ENCODE measurements at regions of chr21 and their contacts with region 1.

Region 1: GRCh38 chr21:45973659-45974072 is 7.9 kb upstream of the COL6A1 start:
- DNase-seq: peak in 5 of 6 donors; percentile 61 to 84 (median 73)
- ATAC-seq: peak; percentile 71 to 78 (median 76)
- H3K4me3 ChIP-seq: peak overlapping the region; percentile 28 to 50 (median 44)
- H3K27ac ChIP-seq: peak overlapping the region; percentile 9 to 64 (median 56)
- H3K4me1 ChIP-seq: peaks cover 0 to 7% (median 0%) of the 10 kb centered on the region in 3 donors
- H3K27me3 ChIP-seq: peaks cover 0 to 4% (median 0%) of the 10 kb centered on the region in 4 donors
- CTCF ChIP-seq: peak in 3 of 4 donors; percentile 45 to 64 (median 52)

Region 2: DNA sequence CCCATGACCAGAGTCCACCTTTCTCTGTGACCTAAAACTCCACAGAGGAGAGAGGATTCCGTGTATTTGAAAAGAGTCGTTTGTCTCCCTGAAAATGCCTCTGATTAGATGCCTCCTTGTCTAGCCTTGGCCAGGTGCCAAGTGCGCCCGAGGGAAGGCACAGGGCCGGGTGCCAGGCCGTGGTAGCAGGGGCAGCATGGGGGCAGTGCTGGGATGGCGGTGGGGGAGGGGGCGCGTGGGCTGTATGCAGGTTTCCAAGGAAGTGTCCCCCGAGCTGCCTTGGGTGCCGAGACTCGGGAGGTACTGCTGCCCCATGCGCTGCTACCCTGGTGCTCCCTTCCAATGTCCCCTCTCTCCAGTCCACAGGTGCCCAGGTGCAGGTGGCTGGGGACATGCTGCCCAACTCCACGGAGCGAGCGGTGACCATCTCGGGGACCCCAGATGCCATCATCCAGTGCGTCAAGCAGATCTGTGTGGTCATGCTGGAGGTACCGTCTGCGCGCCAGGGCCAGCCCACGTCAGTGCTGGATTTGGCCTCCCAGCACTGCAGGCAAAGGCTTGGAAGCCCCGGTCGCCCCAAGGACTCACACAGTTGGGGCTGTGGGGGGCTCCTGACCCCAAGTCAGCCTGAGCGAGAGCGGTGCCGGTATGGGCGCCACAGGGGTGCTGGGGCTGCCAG is 63.0 kb before region 1 on chr21:
- intact Hi-C with region 1: loop called in 1 of 3 experiments (anchors 10 kb)
- DNase-seq: peak in 1 of 6 donors; percentile 57
- ATAC-seq: no peak
- H3K4me3 ChIP-seq: no peak overlapping the region
- H3K27ac ChIP-seq: no peak overlapping the region
- H3K4me1 ChIP-seq: no peaks in the 10 kb centered on the region
- H3K27me3 ChIP-seq: no peaks in the 10 kb centered on the region
- CTCF ChIP-seq: no peak